Body of pancreas (tissue), 4 donors: ENCODE measurements at regions of chr9 and their contacts with region 1.

Region 1: GRCh38 chr9:76808636-76809035 is 44.4 kb downstream of the PCA3 start:
- DNase-seq: no peak
- ATAC-seq: no peak
- H3K4me3 ChIP-seq: no peak overlapping the region
- H3K27ac ChIP-seq: no peak overlapping the region
- H3K4me1 ChIP-seq: no peaks in the 10 kb centered on the region
- H3K27me3 ChIP-seq: no peaks in the 10 kb centered on the region
- CTCF ChIP-seq: no peak
- POLR2A ChIP-seq: no peak

Region 2: DNA sequence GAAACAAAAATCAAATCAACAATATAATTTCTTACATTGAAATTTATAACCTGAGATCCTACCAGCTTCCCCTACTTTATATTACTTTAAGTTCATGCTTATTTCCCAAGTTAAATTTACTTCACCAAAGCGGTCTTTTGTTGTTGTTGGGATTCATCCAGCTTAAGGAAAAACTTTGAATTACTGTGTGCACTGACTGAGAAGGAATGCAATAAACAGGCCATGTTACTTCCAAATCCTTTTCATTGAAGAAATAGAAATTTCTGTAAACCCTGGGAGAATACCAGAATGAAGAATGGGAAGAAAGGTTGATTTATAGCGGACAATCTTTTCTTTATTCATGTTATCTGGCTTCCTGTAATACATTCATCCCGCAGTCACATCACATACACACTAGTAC is 35.6 kb before region 1 on chr9:
- intact Hi-C with region 1: no loop called
- DNase-seq: no peak
- ATAC-seq: no peak
- H3K4me3 ChIP-seq: no peak overlapping the region
- H3K27ac ChIP-seq: no peak overlapping the region
- H3K4me1 ChIP-seq: no peaks in the 10 kb centered on the region
- H3K27me3 ChIP-seq: no peaks in the 10 kb centered on the region
- CTCF ChIP-seq: no peak
- POLR2A ChIP-seq: no peak

Region 3: DNA sequence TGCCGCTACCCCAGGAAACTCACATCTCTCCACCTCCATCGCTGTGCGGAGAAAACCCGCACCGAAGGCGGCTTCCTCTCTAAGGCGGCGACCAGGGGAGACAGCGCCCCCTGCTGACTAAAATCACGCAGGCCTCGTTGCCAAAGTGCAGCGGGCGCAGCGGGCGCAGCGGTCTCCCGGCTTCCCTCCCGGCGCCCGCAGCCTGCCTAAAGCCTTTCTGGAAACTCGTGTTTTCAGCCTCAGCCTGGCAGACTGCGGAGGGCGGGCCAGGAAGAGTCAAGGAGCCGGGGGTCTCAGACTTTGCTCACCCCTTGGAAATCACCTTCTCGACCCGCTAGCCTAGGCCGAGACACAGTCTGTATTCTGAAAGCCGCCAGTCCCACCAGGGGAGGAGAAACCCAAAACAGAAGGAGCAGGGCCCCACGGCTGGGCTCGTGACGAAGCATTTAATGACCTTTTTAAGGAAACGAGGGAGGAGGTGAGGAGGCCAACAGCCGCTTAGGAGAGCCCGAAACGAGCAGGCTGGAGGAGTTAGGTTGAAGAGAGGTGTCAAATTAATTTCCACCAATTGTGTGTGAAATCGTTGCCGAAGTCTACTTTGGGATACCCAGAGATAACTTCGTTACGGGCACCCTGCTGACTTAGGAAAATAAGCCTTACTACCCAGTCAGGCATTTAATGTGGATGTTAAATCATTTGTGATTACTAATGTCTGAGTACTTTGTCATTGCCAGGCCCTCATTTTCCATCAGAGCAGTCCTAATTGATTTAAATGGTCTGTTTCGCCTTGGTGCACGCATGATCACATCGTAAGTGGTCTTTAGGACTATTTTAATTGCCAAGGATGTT is 203.6 kb after region 1 on chr9:
- intact Hi-C with region 1: loop called (anchors 10 kb)
- DNase-seq: peak; percentile 52 to 70 (median 57)
- ATAC-seq: peak; percentile 62
- H3K4me3 ChIP-seq: no peak overlapping the region
- H3K27ac ChIP-seq: no peak overlapping the region
- H3K4me1 ChIP-seq: peaks cover 32% of the 10 kb centered on the region
- H3K27me3 ChIP-seq: peaks cover 0 to 50% of the 10 kb centered on the region in 2 donors
- CTCF ChIP-seq: peak; percentile 44 to 75 (median 62)
- POLR2A ChIP-seq: no peak

Region 4: GRCh38 chr9:77152289-77152688 is 343.7 kb after region 1 on chr9:
- intact Hi-C with region 1: loop called (anchors 2 kb)
- DNase-seq: no peak
- ATAC-seq: no peak
- H3K4me3 ChIP-seq: no peak overlapping the region
- H3K27ac ChIP-seq: no peak overlapping the region
- H3K4me1 ChIP-seq: peaks cover 7% of the 10 kb centered on the region
- H3K27me3 ChIP-seq: no peaks in the 10 kb centered on the region
- CTCF ChIP-seq: no peak
- POLR2A ChIP-seq: no peak